GM12878 (cell line): ENCODE measurements at regions of chr2 and their contacts with region 1.

Region 1: DNA sequence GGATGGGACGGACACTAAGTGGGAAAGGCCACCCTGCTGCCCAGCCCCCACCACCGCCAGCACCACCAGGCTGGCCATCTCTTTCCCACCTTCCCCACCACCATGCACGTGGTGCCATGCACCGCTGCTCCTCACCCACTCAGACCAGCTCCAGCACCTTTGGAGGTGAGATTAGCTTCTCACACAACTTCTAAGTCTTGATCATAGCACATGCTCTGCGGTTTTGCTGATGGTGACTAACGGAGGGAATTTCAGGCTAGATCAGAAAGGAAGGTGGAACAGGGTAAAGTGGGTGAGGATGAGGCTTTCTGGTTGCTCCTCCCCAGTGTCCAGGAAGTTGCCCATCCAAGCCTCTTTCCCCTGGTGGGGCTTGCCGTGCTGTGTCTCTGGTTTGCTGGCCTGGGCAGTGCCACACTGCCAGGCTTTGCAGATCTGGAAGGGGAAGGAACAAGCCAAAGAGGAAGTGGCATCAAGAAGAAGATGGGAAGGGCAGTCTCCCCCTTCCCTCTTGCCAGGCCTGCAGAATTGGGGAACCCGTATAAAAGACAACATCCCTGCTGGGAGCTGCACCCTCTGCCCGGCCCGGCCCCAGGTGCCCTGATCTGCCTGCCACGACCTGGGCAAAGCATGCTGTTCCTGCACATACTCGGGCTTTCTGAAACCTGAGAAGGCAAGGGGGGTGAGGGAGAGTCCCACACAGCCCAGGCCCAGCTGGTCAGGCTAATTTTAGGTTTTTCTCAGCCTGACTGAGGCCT is 44.3 kb upstream of the CAB39 start:
- DNase-seq: peak; percentile 88
- ATAC-seq: peak; percentile 70
- H3K4me3 ChIP-seq: no peak overlapping the region
- H3K27ac ChIP-seq: peak overlapping the region; percentile 92
- H3K4me1 ChIP-seq: peaks cover 73% of the 10 kb centered on the region
- H3K27me3 ChIP-seq: no peaks in the 10 kb centered on the region
- CTCF ChIP-seq: no peak
- EP300 ChIP-seq: peak; percentile 90 to 92
- POLR2A ChIP-seq: peak; percentile 41
- RAD21 ChIP-seq: peak; percentile 10; the same call in 1 of the 2 replicates

Region 2: GRCh38 chr2:230254152-230254881 is 414.0 kb before region 1 on chr2:
- CTCF ChIA-PET with region 1: no interaction called
- POLR2A ChIA-PET with region 1: no interaction called
- RAD21 ChIA-PET with region 1: no interaction called
- SMC1A ChIA-PET with region 1: no interaction called
- in situ Hi-C with region 1: no loop called
- intact Hi-C with region 1: no loop called
- DNase-seq: no peak
- ATAC-seq: no peak
- H3K4me3 ChIP-seq: no peak overlapping the region
- H3K27ac ChIP-seq: no peak overlapping the region
- H3K4me1 ChIP-seq: peaks cover 15% of the 10 kb centered on the region
- H3K27me3 ChIP-seq: no peaks in the 10 kb centered on the region
- CTCF ChIP-seq: no peak
- EP300 ChIP-seq: no peak
- POLR2A ChIP-seq: no peak
- RAD21 ChIP-seq: no peak

Region 3: GRCh38 chr2:230423851-230424458 is 244.4 kb before region 1 on chr2:
- CTCF ChIA-PET with region 1: no interaction called
- POLR2A ChIA-PET with region 1: no interaction called
- RAD21 ChIA-PET with region 1: no interaction called
- SMC1A ChIA-PET with region 1: no interaction called
- in situ Hi-C with region 1: no loop called
- intact Hi-C with region 1: no loop called
- DNase-seq: no peak
- ATAC-seq: peak; percentile 43
- H3K4me3 ChIP-seq: peak overlapping the region; percentile 52; the same call in 1 of the 2 replicates
- H3K27ac ChIP-seq: no peak overlapping the region
- H3K4me1 ChIP-seq: peaks cover 4% of the 10 kb centered on the region; the same call in 1 of the 2 replicates
- H3K27me3 ChIP-seq: no peaks in the 10 kb centered on the region
- CTCF ChIP-seq: no peak
- EP300 ChIP-seq: no peak
- POLR2A ChIP-seq: no peak
- RAD21 ChIP-seq: no peak

Region 4: DNA sequence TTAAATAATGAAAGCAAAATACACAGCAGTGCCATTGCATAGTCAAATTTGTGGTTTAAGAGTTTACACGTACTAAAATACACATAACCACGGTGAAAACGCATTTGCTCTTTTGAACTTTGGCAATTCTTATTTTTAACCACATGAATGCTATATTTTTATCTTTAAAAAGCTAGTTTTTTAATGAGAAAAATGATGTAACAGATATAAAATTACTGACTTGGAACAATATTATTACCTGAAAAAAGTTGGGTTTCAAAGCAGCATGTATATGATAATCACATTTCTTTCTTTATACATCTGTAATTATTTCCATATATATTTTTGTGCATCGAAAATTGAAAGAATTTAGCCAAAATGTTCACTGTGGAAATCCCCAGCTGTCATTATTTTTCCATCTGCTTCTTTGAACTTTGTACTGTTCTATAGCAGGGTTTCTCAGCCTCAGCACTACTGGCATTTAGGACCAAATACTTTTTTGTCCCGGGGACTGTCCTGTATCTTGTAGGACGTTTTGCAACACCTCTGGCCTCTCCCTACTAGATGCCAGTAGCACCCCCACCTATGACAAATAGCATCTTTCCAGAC is 31.6 kb before region 1 on chr2:
- CTCF ChIA-PET with region 1: interaction called, 6 read pairs
- POLR2A ChIA-PET with region 1: interaction called, 10 read pairs
- RAD21 ChIA-PET with region 1: interaction called, 14 read pairs
- SMC1A ChIA-PET with region 1: interaction called, 8 read pairs
- in situ Hi-C with region 1: no loop called
- intact Hi-C with region 1: no loop called
- DNase-seq: no peak
- ATAC-seq: peak; percentile 70
- H3K4me3 ChIP-seq: no peak overlapping the region
- H3K27ac ChIP-seq: peak overlapping the region; percentile 54
- H3K4me1 ChIP-seq: peaks cover 14% of the 10 kb centered on the region
- H3K27me3 ChIP-seq: no peaks in the 10 kb centered on the region
- CTCF ChIP-seq: no peak
- EP300 ChIP-seq: peak in 1 of 2 experiments; percentile 73; a peak in 2 of 4 replicates
- POLR2A ChIP-seq: no peak
- RAD21 ChIP-seq: no peak

Region 5: DNA sequence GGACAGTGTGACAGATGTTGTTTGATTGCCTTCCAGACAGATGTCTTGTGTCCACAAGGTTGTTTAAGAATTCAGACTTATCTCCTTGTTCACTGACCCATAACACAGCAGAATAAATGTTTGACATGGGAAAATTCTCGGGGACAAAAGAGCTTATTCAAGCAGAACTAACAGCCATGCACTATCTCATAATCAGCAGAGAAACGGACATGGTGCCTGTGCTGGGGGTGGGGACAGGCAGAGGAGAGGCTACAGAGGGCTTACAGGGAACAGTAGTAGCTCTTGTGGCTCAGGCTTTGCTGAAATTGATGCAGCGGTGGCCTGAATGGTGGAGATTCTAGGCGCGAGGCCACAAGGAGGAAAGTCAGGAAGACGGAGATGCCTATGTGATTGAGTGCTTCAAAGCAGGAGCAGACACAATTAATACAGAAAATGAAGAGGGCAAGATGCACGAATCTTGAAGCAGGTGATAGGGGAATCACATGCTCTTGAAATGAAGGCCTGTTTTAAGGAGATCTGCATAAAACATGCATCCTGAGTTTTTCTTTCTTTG is 17.7 kb before region 1 on chr2:
- CTCF ChIA-PET with region 1: interaction called, 11 read pairs
- POLR2A ChIA-PET with region 1: interaction called, 80 read pairs
- RAD21 ChIA-PET with region 1: interaction called, 34 read pairs
- SMC1A ChIA-PET with region 1: interaction called, 117 read pairs
- in situ Hi-C with region 1: no loop called
- intact Hi-C with region 1: no loop called
- DNase-seq: peak; percentile 93
- ATAC-seq: peak; percentile 97
- H3K4me3 ChIP-seq: peak overlapping the region; percentile 0; the same call in 1 of the 2 replicates
- H3K27ac ChIP-seq: peak overlapping the region; percentile 54
- H3K4me1 ChIP-seq: peaks cover 12% of the 10 kb centered on the region
- H3K27me3 ChIP-seq: no peaks in the 10 kb centered on the region
- CTCF ChIP-seq: no peak
- EP300 ChIP-seq: peak; percentile 33 to 68; a peak in 2 of 4 replicates
- POLR2A ChIP-seq: no peak
- RAD21 ChIP-seq: peak; percentile 22; the same call in 1 of the 2 replicates

Region 6: GRCh38 chr2:230721712-230722111 is 53.4 kb after region 1 on chr2:
- CTCF ChIA-PET with region 1: interaction called, 4 read pairs
- POLR2A ChIA-PET with region 1: interaction called, 4 read pairs
- RAD21 ChIA-PET with region 1: interaction called, 11 read pairs
- SMC1A ChIA-PET with region 1: interaction called, 11 read pairs
- in situ Hi-C with region 1: no loop called
- intact Hi-C with region 1: no loop called
- DNase-seq: no peak
- ATAC-seq: peak; percentile 55
- H3K4me3 ChIP-seq: peak overlapping the region; percentile 45; the same call in 1 of the 2 replicates
- H3K27ac ChIP-seq: peak overlapping the region; percentile 65
- H3K4me1 ChIP-seq: peaks cover 34% of the 10 kb centered on the region
- H3K27me3 ChIP-seq: no peaks in the 10 kb centered on the region
- CTCF ChIP-seq: no peak
- EP300 ChIP-seq: no peak
- POLR2A ChIP-seq: no peak
- RAD21 ChIP-seq: no peak

Region 7: DNA sequence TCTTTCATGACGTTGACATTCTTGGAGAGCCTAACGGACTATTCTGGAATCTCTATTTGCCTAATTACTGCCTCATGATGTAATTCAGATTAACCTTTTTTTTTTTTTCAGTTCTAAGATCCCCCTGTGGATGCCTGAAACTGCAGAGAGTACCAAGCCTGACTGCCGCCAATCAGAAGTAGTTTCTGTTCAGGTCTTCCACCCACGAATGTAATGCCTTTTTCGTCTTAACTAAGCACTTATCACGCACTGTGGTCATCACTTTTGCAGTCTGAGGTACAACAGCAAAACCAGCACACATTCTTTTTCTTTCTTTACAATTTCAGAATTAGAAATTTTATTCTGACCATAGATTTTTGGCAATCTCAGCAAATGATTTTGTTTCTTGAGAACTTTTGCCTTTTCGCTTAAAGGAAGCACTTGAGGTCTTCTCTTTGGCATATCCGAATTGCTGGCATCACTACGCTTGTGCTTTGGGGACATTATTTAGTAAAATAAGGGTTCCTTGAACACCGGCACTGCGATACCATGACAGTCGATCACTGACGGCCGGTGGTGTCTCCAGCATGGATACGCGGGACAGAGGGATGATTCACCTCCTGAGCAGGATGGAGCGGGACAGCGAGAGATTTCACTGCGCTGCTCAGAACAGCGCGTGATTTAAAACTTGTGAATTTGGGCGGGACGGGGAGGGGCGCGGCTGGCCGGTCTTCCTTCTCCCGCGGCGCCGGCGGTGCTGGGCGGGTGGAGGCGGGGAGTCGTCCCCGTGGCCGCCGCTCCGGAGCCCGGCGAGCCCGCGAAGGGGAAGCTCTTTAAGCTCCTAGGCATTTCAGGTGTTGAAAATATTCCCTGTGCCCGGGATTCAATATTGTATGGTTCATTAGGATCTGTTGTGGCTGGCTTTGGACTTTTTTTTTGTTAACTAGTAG is 288.7 kb after region 1 on chr2:
- CTCF ChIA-PET with region 1: no interaction called
- POLR2A ChIA-PET with region 1: no interaction called
- RAD21 ChIA-PET with region 1: no interaction called
- SMC1A ChIA-PET with region 1: no interaction called
- in situ Hi-C with region 1: loop called (anchors 10 kb)
- intact Hi-C with region 1: no loop called
- DNase-seq: peak; percentile 91
- ATAC-seq: peak; percentile 79
- H3K4me3 ChIP-seq: peak overlapping the region; percentile 72
- H3K27ac ChIP-seq: peak overlapping the region; percentile 99
- H3K4me1 ChIP-seq: peaks cover 54% of the 10 kb centered on the region
- H3K27me3 ChIP-seq: no peaks in the 10 kb centered on the region
- CTCF ChIP-seq: no peak
- EP300 ChIP-seq: peak; percentile 84 to 92; a peak in 2 of 4 replicates
- POLR2A ChIP-seq: peak; percentile 87
- RAD21 ChIP-seq: peak; percentile 37; the same call in 1 of the 2 replicates